ENCODE measurements at regions of chr6 and their contacts with region 1.

Region 1: DNA sequence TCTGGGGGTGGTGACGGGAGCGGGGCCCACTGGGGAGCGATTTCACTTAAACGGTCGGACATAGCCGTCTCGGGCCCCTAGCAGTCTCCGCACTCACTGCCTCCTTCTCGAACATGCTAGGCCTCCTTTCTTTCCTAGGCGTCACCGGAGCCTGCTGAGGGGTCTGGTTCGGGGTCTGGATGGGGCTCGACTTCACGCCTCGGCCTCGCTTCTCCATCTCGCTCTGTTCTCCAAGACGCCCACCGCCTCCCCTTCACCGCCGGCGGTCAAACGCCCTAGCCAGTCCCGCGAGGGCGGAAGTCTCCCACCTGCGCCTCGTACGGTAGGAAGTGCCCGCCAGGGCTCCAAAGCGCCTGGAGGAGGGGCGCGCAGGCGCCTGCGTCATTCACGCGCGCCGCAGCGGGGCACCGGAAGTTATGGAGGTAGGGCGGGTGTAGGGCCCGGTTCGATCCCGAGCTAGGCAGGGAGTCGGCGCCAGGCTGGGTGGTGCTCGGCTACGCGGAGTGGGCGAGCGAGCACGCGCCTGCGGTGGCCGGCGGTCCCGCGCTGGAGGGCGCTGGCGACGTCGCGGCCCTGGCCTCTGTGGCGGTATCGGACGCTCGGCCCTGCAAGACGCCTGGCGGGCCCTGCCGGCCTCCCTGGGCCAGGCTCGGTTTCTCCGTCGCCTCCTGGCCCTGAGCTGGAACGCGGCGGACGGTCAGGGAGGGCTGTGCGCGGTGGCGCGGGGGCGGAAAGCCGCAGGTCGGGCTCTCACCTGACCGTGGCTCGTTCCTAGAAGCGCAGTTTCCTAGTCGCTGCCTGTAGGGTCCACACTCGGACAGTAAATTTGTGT is at the starts of genes DYNLT2 and ERMARD:
- DNase-seq: peak; percentile 93
- H3K4me3 Mint-ChIP-seq: peak within 1 kb of the TSS; percentile 97
- H3K27ac Mint-ChIP-seq: peak within 1 kb of the TSS; percentile 99
- H3K4me1 Mint-ChIP-seq: peaks cover 22% of the 10 kb centered on the region
- H3K27me3 Mint-ChIP-seq: peaks cover 2% of the 10 kb centered on the region
- total RNA-seq, gene DYNLT2: 1.9 and 2.1 TPM in 2 replicates
- total RNA-seq, gene ERMARD: 24.5 and 25.9 TPM in 2 replicates

Region 2: GRCh38 chr6:169701954-169702839 is 49.3 kb before region 1 on chr6 and contains the starts of genes C6orf120 and WDR27:
- intact Hi-C with region 1: loop called (anchors 1 kb)
- DNase-seq: peak; percentile 95
- H3K4me3 Mint-ChIP-seq: peak within 1 kb of the TSS; percentile 88
- H3K27ac Mint-ChIP-seq: peak within 1 kb of the TSS; percentile 84
- H3K4me1 Mint-ChIP-seq: peaks cover 39% of the 10 kb centered on the region
- H3K27me3 Mint-ChIP-seq: no peaks in the 10 kb centered on the region
- total RNA-seq, gene C6orf120: 18.9 and 19.6 TPM in 2 replicates
- total RNA-seq, gene WDR27: 35.0 and 35.9 TPM in 2 replicates

Region 3: DNA sequence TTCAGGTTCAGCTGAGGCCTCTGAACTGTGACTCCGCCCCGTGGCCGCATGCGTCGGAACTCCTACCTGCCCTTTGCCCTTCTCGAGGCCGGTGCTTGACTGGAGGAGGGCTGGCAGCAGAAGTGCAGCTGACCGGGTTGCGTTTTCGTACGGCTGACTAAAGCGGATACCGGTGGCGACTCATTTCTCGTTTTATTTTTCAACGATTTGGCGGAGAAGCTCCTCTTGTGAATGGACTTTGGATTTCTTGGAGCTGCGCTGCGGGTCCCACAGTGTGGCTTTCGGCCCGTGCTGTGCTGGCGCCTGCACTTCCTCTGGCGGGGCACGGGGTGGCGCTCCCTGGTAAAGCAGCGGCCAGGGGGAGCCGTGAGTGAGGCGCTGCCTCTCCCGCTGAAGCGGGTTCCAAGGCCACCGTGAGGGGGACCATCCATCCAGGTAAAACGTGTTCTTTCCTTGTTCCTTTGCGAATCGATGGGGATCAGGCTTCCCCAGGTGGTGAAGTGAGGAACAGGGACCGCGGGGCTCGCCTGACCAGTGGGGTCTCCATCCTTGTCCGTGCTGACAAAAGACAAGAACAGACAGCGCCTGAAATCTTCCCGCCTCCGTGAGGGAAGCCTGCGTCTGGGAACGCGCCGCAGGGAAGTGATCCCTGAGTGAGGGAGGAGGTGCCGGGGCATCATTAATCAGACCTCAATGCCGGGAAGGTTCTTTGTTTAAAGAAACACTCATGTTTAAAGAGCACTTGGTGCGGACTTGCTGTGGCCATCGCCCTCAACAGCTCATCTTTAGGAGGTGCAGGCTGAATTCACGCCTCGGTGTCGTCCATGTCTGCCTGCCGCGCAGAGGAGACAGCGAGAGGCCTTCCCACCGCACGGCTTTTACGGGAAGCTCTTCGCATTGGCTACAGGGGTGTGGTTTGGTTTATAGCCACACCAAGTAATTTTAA is 38.8 kb after region 1 on chr6:
- intact Hi-C with region 1: loop called (anchors 1 kb)
- DNase-seq: peak; percentile 62
- H3K4me3 Mint-ChIP-seq: peak overlapping the region; percentile 78
- H3K27ac Mint-ChIP-seq: peak overlapping the region; percentile 14
- H3K4me1 Mint-ChIP-seq: peaks cover 14% of the 10 kb centered on the region
- H3K27me3 Mint-ChIP-seq: peaks cover 16% of the 10 kb centered on the region

Region 4: GRCh38 chr6:169940481-169941271 is 189.2 kb after region 1 on chr6:
- intact Hi-C with region 1: no loop called
- DNase-seq: no peak
- H3K4me3 Mint-ChIP-seq: no peak overlapping the region
- H3K27ac Mint-ChIP-seq: no peak overlapping the region
- H3K4me1 Mint-ChIP-seq: peaks cover 5% of the 10 kb centered on the region
- H3K27me3 Mint-ChIP-seq: peaks cover 5% of the 10 kb centered on the region

Region 5: DNA sequence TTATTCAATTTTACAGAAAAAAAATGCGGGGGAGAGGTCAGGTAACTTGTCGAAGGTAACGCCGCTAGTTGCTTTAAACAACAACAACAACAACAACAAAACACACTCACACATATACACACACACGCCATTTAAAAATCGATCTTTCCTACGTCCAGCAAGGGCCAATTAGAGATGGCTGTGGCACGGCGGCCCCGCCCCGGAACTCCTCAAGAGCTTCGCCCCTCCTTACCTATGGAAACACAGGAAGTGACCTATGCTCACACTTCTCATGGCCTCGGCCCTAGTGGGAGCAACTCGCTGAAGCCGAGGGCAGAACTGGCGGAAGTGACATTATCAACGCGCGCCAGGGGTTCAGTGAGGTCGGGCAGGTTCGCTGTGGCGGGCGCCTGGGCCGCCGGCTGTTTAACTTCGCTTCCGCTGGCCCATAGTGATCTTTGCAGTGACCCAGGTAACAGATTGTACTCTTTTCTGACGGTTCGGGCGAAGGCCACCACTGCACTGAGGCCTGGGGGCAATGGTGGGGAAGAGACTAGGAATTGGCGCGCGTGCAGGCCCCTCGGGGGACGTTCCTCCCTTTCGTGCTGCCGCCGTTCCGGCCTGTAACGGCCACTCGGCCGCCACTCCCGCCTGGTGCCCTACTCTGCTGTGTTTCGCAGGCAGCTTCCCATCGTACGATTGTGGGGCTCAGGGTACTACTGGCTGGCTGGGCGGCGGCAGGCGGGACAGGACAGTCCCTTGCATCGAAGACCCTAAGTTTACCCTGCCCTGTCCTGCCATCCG is 802.7 kb after region 1 on chr6 and contains the start of gene TBP:
- intact Hi-C with region 1: loop called (anchors 1 kb)
- DNase-seq: peak; percentile 96
- H3K4me3 Mint-ChIP-seq: no peak within 1 kb of the TSS
- H3K27ac Mint-ChIP-seq: no peak within 1 kb of the TSS
- H3K4me1 Mint-ChIP-seq: peaks cover 34% of the 10 kb centered on the region
- H3K27me3 Mint-ChIP-seq: no peaks in the 10 kb centered on the region
- total RNA-seq, gene TBP: 26.4 and 27.8 TPM in 2 replicates

Measured in activated T-helper 2 cell treated with anti-CD3 and anti-CD28 coated beads, Interferon-gamma antibody, Interleukin-2, Interleukin-4, amounts not matched to agents 10 μg/mL and 5 μg/mL and 100 μg/mL, durations not matched to agents 14 hours and 24 hours and 36 hours (primary cell).